Uterus (tissue), 4 donors: ENCODE measurements at regions of chr17 and their contacts with region 1.

Region 1: DNA sequence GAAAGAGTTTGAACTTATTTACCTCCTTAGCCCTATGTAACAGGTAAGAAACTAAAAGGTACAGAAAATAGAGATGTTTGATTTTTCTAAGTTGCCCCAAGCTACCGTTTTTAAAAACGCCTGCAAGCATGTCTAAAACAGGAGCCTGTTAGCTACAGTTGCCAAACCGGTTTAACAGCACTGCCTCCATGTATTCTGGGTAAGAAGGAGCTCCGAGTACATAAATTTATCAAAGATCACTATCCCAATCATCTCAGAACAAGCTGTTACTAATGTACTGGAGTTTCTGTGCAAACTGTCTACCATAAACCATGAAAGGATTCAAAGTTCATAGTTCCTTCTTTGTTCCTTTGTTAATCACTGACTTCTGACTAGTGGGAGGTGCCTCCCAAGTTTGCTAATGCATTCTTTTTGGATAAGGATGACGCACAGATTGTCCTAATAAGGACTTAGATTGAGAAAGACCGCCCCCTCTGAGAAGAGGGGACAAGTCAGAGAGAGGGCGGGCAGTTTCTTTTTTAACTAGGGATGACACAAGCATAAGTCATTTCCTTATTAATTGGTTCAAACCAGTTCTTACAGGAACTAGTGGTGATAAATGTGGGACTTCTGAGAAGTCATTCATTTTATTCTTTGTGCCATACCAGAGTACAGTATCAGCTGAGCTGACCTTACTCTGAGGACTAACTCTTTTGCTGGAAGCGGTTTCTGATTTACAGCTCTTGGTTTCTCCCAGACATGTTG is 55.3 kb downstream of the TUBD1 start:
- DNase-seq: peak; percentile 60 to 89
- H3K4me3 ChIP-seq: peak overlapping the region; percentile 61 to 63
- H3K27ac ChIP-seq: peak overlapping the region; percentile 94 to 97
- H3K4me1 ChIP-seq: no peaks in the 10 kb centered on the region
- H3K27me3 ChIP-seq: no peaks in the 10 kb centered on the region
- CTCF ChIP-seq: peak in 1 of 4 experiments; percentile 18
- POLR2A ChIP-seq: peak; percentile 76 to 94

Region 2: DNA sequence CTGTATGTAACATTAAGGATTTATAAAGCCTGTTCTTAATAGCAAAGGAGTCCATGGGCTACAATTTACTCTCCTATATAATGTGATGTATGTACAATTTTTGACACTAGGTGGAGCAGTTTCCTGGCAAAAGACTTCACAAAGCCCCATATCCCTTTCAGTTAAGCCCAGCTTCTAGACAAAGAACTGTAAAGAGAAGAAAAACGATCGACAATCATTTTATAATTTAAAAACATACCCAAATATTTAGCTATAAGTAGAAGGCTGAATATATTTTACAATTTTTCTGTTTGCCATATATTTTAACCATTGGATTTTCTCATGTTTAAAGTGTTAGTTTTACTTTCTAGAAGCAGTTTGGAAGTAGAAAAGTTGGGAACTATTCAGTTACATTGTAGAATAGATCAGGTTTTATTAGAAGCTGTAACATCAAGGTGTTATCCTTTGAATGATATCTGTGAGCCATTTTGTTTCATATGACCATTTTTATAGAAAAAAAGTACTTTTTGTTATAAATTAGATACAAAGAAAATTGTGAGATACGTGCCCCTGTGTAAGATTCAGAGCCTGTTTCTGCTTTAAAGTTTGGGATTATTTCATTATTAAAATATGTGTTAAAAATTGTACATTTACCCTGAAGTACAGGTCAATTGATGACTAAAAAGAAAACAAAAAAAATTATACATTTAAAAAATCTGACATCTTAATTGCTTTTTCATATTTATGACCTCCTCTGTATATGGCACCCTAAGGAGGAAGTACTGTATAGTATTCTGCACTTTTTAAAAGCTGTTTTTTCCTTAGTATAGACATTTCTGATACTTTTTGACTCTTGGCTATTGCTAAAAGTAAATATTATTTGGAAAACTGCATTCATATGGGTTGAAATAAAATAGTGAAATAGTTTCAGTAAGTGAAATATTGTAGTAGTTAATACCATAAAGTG is 83.7 kb before region 1 on chr17:
- intact Hi-C with region 1: loop called (anchors 10 kb)
- DNase-seq: peak in 1 of 2 donors; percentile 45
- H3K4me3 ChIP-seq: no peak overlapping the region
- H3K27ac ChIP-seq: peak overlapping the region; percentile 66 to 77
- H3K4me1 ChIP-seq: no peaks in the 10 kb centered on the region
- H3K27me3 ChIP-seq: no peaks in the 10 kb centered on the region
- CTCF ChIP-seq: peak; percentile 64 to 88 (median 76)
- POLR2A ChIP-seq: no peak

Region 3: GRCh38 chr17:60060474-60060873 is 223.0 kb after region 1 on chr17:
- intact Hi-C with region 1: no loop called
- DNase-seq: no peak
- H3K4me3 ChIP-seq: no peak overlapping the region
- H3K27ac ChIP-seq: no peak overlapping the region
- H3K4me1 ChIP-seq: no peaks in the 10 kb centered on the region
- H3K27me3 ChIP-seq: no peaks in the 10 kb centered on the region
- CTCF ChIP-seq: no peak
- POLR2A ChIP-seq: no peak